ENCODE measurements at regions of chr19 and their contacts with region 1.

Region 1: GRCh38 chr19:38964738-38965137 is 10.8 kb downstream of the FBXO17 start:
- H3K4me3 ChIP-seq: no peak overlapping the region
- H3K27ac ChIP-seq: no peak overlapping the region
- H3K4me1 ChIP-seq: peaks cover 8% of the 10 kb centered on the region
- CTCF ChIP-seq: no peak

Region 2: GRCh38 chr19:39038098-39038497 is 73.4 kb after region 1 on chr19:
- CTCF ChIA-PET with region 1: interaction called, 44 read pairs
- POLR2A ChIA-PET with region 1: interaction called, 5 read pairs
- H3K4me3 ChIP-seq: no peak overlapping the region
- H3K27ac ChIP-seq: no peak overlapping the region
- H3K4me1 ChIP-seq: peaks cover 14% of the 10 kb centered on the region
- CTCF ChIP-seq: peak; percentile 74; the same call in 1 of the 2 replicates